ENCODE measurements at regions of chr4 and their contacts with region 1.

Region 1: DNA sequence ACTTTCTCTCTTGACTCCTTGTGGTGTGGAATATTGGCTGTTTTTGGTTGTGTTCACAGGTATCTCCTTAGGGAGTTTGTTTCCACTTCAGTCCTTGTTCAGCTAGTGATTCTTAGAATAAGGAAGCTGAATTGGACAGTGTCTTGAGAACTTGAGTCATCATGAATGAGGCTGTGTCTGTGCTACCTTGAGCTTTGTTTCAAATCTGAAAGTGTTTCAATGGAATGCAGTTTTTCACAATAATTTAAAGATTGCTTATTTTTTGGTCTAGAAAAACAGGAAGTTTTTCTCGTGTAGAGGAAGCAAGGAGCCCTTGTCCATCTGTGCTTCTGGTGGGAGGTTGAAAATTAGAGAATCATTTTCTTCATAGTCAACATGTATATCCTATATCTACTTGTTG is 76.5 kb downstream of the ZNF518B start:
- DNase-seq: no peak
- ATAC-seq: no peak
- H3K4me3 ChIP-seq: no peak overlapping the region
- H3K27ac ChIP-seq: no peak overlapping the region
- H3K4me1 ChIP-seq: no peaks in the 10 kb centered on the region
- H3K27me3 ChIP-seq: no peaks in the 10 kb centered on the region
- CTCF ChIP-seq: no peak

Region 2: GRCh38 chr4:10179957-10180602 is 200.7 kb before region 1 on chr4:
- intact Hi-C with region 1: loop called in 1 of 10 experiments (anchors 5 kb)
- DNase-seq: no peak
- ATAC-seq: no peak
- H3K4me3 ChIP-seq: no peak overlapping the region
- H3K27ac ChIP-seq: peak overlapping the region in 2 of 10 donors; percentile 9 to 81
- H3K4me1 ChIP-seq: peaks cover 0 to 40% (median 4%) of the 10 kb centered on the region in 9 donors
- H3K27me3 ChIP-seq: no peaks in the 10 kb centered on the region
- CTCF ChIP-seq: no peak

Region 3: GRCh38 chr4:10366628-10367027 is 14.1 kb before region 1 on chr4:
- intact Hi-C with region 1: loop called in 1 of 10 experiments (anchors 1 kb)
- DNase-seq: no peak
- ATAC-seq: no peak
- H3K4me3 ChIP-seq: no peak overlapping the region
- H3K27ac ChIP-seq: no peak overlapping the region
- H3K4me1 ChIP-seq: no peaks in the 10 kb centered on the region
- H3K27me3 ChIP-seq: peaks cover 0 to 10% (median 0%) of the 10 kb centered on the region in 7 donors
- CTCF ChIP-seq: no peak

Measured in heart right ventricle (tissue), 16 donors.